ENCODE measurements at regions of chr17 and their contacts with region 1.

Region 1: DNA sequence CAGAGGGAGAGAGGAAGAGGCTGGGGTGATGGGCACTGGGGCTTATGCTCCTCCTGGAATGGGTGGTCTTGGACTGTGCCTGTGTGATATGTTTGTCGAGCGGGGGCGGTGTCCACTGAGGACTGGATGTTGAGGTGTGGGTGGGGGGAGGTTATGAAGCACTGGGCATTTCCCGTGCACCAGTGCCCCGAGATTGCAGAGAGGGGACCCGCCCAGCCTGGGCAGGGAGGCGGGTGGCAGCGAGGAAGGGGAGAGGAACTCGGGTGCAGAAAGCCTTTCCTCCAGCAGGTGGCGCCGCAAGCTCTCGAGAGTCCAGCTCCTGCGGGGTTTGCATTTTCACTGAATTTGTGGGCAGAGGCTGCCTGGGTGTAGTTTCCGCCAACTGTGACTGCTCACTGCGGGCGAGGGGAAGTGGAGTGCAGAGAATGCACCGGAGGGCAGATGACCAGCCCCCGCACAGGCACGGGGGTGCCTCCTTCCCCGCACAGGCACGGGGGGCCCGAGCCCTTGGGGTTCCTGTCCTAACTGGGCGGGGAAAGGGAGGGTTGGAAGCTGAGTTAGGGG is 190.6 kb downstream of the SEC14L1 start:
- DNase-seq: peak; percentile 83 to 89
- H3K4me3 ChIP-seq: no peak overlapping the region
- H3K4me3 Mint-ChIP-seq: peak overlapping the region; percentile 41
- H3K27ac Mint-ChIP-seq: peak overlapping the region; percentile 56
- H3K4me1 ChIP-seq: peaks cover 15% of the 10 kb centered on the region
- H3K4me1 Mint-ChIP-seq: peaks cover 34% of the 10 kb centered on the region
- H3K27me3 ChIP-seq: no peaks in the 10 kb centered on the region
- H3K27me3 Mint-ChIP-seq: no peaks in the 10 kb centered on the region
- CTCF ChIP-seq: peak; percentile 91 to 94

Region 2: DNA sequence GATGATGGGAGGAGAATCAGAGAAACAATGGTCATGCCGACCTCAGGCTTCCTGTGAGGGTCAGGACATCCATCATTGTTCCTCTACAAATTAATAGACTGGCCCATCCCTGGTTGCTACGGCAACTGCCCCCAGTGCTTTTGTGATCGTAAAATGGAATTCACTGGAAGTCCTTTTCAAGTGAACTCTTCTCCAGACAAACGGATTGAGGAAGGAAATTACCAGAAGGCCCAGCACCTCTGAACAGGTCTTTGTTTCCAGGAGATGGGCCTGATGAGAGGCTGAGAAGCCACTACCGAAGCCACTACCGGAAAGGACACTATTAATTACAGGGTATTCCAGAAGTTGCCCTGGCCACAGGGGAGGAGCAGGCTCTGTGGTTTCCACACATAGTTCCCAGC is 337.1 kb before region 1 on chr17:
- CTCF ChIA-PET with region 1: no interaction called
- POLR2A ChIA-PET with region 1: no interaction called
- intact Hi-C with region 1: no loop called
- DNase-seq: no peak
- H3K4me3 ChIP-seq: no peak overlapping the region
- H3K4me3 Mint-ChIP-seq: no peak overlapping the region
- H3K27ac Mint-ChIP-seq: no peak overlapping the region
- H3K4me1 ChIP-seq: peaks cover 16% of the 10 kb centered on the region; the same call in 1 of the 2 replicates
- H3K4me1 Mint-ChIP-seq: peaks cover 21% of the 10 kb centered on the region
- H3K27me3 ChIP-seq: no peaks in the 10 kb centered on the region
- H3K27me3 Mint-ChIP-seq: no peaks in the 10 kb centered on the region
- CTCF ChIP-seq: no peak

Region 3: DNA sequence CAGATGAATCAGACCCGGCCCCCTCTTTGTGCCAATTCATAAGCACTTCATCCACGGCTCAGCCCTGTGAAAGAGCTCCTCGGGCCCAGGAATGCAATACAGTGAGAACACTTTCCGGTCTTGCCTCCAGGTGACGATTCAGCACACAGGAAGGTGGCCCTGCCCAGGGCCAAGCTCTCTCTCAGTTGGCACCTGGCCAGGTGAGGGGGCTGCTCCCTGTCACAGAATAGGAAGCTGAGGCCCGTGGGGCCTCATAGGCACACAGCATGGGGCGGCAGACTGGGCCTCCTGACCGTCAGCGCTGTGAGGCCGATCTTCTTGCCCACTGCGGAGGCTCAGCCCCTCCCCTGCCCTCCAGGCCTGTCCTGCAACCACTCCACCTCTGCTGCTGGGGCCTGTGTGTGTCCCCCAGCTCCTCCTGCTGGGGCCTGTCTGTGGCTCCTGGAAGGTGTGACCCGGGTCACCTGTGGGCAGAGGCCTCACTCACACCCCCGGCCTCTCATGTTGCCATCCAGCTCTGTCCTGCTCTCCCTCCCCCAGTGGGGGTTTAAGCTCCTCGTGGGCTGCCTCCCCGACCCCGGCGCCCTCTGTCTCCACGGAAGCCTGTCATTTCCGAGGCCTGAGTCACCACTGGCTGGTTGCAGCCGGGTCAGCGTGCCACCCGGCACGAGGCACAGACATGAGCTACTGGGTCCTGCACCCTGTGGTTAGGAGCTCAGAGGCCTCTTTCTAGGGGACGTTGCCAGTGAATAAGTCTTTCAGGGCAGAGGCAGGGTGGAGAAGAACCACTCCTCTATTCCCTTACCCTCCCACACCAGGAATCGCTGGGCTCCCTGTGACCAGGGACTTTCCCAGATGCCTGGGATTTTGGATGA is 76.2 kb before region 1 on chr17:
- CTCF ChIA-PET with region 1: no interaction called
- POLR2A ChIA-PET with region 1: no interaction called
- intact Hi-C with region 1: no loop called
- DNase-seq: peak; percentile 64 to 82
- H3K4me3 ChIP-seq: no peak overlapping the region
- H3K4me3 Mint-ChIP-seq: peak overlapping the region; percentile 33
- H3K27ac Mint-ChIP-seq: peak overlapping the region; percentile 91
- H3K4me1 ChIP-seq: peaks cover 22% of the 10 kb centered on the region
- H3K4me1 Mint-ChIP-seq: peaks cover 17% of the 10 kb centered on the region
- H3K27me3 ChIP-seq: no peaks in the 10 kb centered on the region
- H3K27me3 Mint-ChIP-seq: no peaks in the 10 kb centered on the region
- CTCF ChIP-seq: no peak

Region 4: DNA sequence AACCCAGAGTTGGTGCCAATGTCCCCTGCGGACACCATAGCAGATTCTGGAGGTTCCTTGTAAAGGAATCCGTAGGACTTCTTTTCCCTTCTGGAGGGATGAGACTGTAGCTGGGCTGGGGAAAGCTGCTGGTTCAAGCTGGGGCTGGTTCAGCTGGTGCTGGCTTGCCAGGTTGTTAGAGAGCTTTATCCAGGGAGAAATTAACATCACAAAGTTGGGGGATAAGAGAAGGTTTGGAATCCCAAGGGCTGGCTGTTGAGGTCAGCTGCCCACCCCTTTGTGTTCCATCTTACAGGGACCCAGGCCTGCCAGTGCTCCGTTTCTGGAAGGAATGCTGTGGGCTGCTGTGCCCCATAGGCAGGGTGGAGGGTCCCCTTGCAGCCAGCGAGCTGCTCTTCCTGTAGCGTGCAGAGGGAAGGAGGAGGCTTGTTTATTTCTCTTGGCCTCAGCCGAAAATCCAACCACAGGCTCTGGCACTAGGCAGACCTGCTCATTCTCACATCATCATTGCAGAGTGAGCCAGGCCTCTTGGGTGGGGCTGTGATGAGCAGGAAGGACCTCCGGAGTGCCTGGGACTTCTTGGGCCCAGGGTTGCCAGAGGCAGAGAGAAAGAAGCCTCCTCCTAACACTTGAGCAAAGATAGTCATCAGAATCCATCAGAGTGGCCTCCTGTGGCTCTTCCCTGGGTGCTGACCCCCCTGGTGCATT is 60.4 kb after region 1 on chr17:
- CTCF ChIA-PET with region 1: no interaction called
- POLR2A ChIA-PET with region 1: no interaction called
- intact Hi-C with region 1: loop called (anchors 5 kb)
- DNase-seq: no peak
- H3K4me3 ChIP-seq: no peak overlapping the region
- H3K4me3 Mint-ChIP-seq: peak overlapping the region; percentile 19
- H3K27ac Mint-ChIP-seq: peak overlapping the region; percentile 80
- H3K4me1 ChIP-seq: peaks cover 70% of the 10 kb centered on the region
- H3K4me1 Mint-ChIP-seq: peaks cover 53% of the 10 kb centered on the region
- H3K27me3 ChIP-seq: no peaks in the 10 kb centered on the region
- H3K27me3 Mint-ChIP-seq: no peaks in the 10 kb centered on the region
- CTCF ChIP-seq: no peak

Measured in Caco-2 (cell line).